ENCODE measurements at regions of chr13 and their contacts with region 1.

Region 1: GRCh38 chr13:43915451-43915850 is 35.7 kb downstream of the LACC1 start:
- DNase-seq: no peak
- H3K4me3 ChIP-seq: no peak overlapping the region
- H3K27ac ChIP-seq: peak overlapping the region in 1 of 2 donors; percentile 45
- H3K4me1 ChIP-seq: peaks cover 0 to 34% (median 0%) of the 10 kb centered on the region in 4 donors
- H3K27me3 ChIP-seq: no peaks in the 10 kb centered on the region
- CTCF ChIP-seq: no peak

Region 2: GRCh38 chr13:43874504-43875092 is 40.9 kb before region 1 on chr13:
- intact Hi-C with region 1: no loop called
- DNase-seq: no peak
- H3K4me3 ChIP-seq: no peak overlapping the region
- H3K27ac ChIP-seq: no peak overlapping the region
- H3K4me1 ChIP-seq: peaks cover 0 to 6% (median 0%) of the 10 kb centered on the region in 4 donors
- H3K27me3 ChIP-seq: no peaks in the 10 kb centered on the region
- CTCF ChIP-seq: peak; percentile 54 to 69

Region 3: GRCh38 chr13:44050450-44051063 is 135.1 kb after region 1 on chr13:
- intact Hi-C with region 1: loop called (anchors 10 kb)
- DNase-seq: no peak
- H3K4me3 ChIP-seq: no peak overlapping the region
- H3K27ac ChIP-seq: peak overlapping the region; percentile 55 to 79
- H3K4me1 ChIP-seq: peaks cover 0 to 40% (median 20%) of the 10 kb centered on the region in 4 donors
- H3K27me3 ChIP-seq: no peaks in the 10 kb centered on the region
- CTCF ChIP-seq: peak; percentile 65 to 79